ENCODE measurements at regions of chr12 and their contacts with region 1.

Region 1: DNA sequence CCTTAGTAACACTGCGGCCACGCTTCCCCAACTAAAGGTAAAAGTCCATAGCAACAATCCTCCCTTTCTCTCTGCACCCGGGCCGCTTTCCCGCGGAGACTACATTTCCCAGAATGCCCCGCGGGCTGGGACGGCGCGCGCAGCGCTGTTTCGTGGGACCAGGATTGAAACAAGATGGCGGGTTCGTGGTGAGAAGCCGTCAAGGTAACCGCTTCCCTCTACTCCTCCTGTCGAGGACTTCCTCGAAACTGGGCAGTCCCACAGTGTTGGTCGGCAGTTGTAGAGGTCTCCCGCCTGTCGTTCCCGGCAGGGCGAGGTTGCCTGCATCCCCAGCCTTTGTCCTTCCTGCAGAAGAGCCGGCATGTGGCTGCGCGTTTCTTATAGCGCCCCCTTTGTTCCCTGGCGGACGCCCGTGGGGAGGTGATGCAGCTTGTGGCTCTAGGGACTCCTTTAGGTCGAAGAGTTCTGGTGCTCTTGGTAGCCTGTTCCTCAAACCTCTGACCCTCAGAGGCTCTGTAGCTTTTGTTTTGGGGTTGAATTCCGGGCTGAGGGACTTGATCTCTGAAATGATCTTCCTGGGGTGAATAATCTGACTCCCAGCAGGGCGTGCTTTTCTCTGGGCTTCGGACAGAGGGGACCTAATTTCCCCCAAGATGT is at the start of gene MRPL42:
- DNase-seq: peak; percentile 91
- H3K4me3 ChIP-seq: peak within 1 kb of the TSS; percentile 87 to 95 (median 88)
- H3K27ac ChIP-seq: peak within 1 kb of the TSS; percentile 86
- H3K4me1 ChIP-seq: peaks cover 9% of the 10 kb centered on the region
- H3K27me3 ChIP-seq: no peaks in the 10 kb centered on the region
- CTCF ChIP-seq: peak; percentile 72 to 83
- POLR2A ChIP-seq: peak; percentile 90
- total RNA-seq, gene MRPL42: 58.0 and 61.2 TPM in 2 replicates

Region 2: DNA sequence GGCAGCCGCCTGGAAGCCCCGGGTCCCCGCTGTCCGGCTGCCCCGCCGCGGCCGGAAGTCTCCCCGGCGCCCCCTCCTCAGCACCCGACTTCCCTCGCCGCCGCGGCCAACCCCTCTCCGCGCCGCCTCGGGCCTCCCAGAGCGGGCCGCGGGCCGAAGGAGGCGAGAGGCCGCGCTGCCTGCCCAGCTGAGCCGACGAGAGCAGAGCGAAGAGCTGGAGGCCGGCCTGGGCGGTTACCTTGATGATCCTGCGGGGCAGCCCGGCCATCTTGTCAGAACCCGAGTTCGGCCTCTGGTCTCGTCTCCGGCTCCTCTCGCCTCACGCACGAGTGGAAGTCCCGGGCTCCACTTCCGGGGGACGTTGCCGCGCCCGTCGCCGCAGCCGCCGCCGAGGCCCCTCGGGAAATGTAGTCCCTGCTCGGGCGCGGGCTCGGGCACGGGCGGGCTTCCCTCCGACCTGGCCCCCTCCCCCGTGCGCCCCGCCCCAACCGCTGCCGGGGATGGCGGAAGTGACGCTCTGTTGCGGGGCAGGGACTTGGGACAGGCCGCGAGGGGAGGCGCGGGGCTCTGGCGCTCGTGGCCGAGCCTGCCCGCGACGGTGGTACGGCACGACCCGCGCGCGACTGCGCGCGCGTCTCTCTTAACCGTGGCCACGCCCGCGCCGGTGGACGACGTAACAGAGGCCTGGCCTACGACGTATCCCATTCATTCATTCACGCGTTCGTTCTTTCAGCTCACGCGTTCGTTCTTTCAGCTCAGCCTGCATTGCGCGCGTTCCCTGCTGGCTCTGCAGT is 25.7 kb before region 1 on chr12 and contains the start of gene UBE2N:
- CTCF ChIA-PET with region 1: interaction called, 6 read pairs
- POLR2A ChIA-PET with region 1: no interaction called
- dilution Hi-C with region 1: no loop called
- intact Hi-C with region 1: loop called (anchors 1 kb)
- DNase-seq: peak; percentile 96
- H3K4me3 ChIP-seq: peak within 1 kb of the TSS; percentile 73 to 89 (median 79)
- H3K27ac ChIP-seq: peak within 1 kb of the TSS; percentile 82
- H3K4me1 ChIP-seq: peaks cover 22% of the 10 kb centered on the region
- H3K27me3 ChIP-seq: no peaks in the 10 kb centered on the region
- CTCF ChIP-seq: no peak
- POLR2A ChIP-seq: peak; percentile 74
- total RNA-seq, gene UBE2N: 125 and 130 TPM in 2 replicates

Region 3: DNA sequence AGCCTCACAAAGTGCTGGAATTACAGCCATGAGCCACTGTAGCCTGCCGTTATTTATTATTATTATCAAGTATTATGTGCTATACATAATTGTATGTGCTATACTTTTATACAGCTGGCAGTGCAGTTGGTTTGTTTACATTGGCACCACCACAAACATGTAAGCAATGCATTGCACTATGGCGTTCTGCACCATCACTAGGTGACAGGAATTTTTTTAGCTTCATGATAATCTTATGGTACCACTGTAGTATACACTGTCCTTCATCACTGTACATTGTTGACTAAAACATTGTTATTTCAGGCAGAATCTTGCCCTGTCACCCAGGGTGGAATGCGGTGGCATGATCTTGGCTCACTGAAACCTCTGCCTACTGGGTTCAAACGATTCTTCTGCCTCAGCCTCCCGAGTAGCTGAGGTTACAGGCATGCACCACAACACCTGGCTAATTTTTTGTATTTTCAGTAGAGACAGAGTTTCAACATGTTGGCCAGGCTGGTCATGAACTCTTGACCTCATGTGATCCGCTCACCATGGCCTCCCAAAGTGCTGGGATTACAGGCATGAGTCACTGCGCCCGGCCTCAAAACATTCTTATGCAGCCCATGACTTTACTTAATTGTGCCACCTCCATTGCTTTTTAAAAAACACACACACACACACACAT is 17.0 kb after region 1 on chr12:
- CTCF ChIA-PET with region 1: interaction called, 12 read pairs
- POLR2A ChIA-PET with region 1: interaction called, 3 read pairs
- dilution Hi-C with region 1: no loop called
- intact Hi-C with region 1: no loop called
- DNase-seq: no peak
- H3K4me3 ChIP-seq: no peak overlapping the region
- H3K27ac ChIP-seq: no peak overlapping the region
- H3K4me1 ChIP-seq: no peaks in the 10 kb centered on the region
- H3K27me3 ChIP-seq: no peaks in the 10 kb centered on the region
- CTCF ChIP-seq: no peak
- POLR2A ChIP-seq: no peak

Region 4: DNA sequence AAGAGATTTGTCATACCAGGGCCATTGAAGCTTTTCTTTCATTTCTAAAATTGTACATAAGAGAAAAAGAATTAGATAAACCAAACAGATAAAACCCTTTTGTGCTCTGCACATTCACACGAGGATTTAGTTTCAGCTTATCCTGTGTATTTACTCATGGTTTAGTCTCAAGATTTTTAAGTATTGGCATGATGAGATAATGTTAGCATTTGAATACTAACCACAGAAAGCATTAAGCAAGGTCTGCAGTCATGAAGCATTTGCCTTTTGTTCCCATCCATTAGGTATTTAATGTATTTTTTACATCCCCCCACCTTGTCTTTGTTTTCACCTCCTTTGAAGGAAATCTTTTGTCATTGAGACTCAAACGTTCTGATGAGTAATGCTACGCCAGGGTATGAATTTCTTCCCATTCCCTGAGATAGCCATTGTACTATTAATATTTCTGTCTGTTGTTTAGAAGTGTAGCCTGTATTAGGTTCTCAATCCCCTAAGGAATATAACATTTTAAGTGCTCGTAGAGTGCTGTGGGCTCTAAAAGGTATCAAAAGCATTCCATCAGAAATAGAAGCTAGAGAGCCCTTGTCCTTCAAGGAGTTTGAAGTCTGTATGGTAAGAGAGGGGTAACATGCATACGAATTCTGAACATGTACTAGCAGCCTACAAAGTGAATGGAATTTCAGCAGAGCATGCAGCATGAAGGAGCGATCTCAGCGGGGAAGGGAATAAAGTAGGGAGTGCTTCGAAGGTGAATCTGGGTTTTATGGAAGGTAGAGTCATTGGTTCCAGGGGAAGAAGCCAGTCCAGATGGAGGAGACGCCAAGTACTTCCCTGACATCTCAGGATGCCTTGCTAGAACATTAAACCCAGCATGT is 232.0 kb after region 1 on chr12:
- CTCF ChIA-PET with region 1: no interaction called
- POLR2A ChIA-PET with region 1: no interaction called
- dilution Hi-C with region 1: no loop called
- intact Hi-C with region 1: no loop called
- DNase-seq: no peak
- H3K4me3 ChIP-seq: no peak overlapping the region
- H3K27ac ChIP-seq: no peak overlapping the region
- H3K4me1 ChIP-seq: no peaks in the 10 kb centered on the region
- H3K27me3 ChIP-seq: no peaks in the 10 kb centered on the region
- CTCF ChIP-seq: no peak
- POLR2A ChIP-seq: no peak

Measured in endothelial cell of umbilical vein (primary cell).